ENCODE measurements at regions of chrX and their contacts with region 1.

Region 1: GRCh38 chrX:48776818-48777439 is 9.5 kb upstream of the GATA1 start:
- DNase-seq: no peak

Region 2: DNA sequence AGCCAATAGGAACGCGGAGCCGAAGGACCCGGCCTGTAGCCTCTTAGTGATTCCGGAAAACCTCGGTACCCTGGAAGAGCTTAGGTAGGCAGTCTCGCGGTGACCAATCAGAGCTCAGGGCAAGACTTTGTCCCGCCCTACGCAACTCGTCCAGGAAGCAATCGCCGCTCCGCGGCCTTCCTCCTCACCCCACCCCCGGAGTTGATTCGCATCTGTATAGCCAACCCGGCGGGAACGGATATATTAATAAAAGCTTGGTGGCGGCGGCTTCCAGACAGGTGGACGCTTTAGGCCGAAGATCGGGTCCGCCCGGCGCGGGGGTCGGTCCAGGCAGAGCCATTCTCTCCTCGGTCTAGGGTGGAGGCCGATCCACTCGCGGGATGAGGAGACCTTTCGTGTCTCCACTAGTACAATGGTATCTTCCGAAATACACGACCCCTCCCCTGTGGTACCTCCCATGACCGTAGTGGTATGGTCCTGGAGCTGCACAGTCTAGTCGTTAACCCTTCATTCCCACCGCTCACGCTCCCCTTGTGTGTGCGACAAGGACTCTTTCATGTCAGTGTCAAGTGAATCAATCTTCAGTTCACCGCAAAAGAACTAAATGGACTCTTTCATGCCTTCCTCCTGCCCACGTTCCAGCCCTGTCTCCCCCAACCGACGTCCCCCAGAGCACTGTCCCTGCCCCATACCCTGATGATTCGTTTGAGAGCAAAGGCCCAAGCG is 39.6 kb before region 1 on chrX:
- intact Hi-C with region 1: loop called in 1 of 2 experiments (anchors 1 kb)
- DNase-seq: peak; percentile 97

Region 3: DNA sequence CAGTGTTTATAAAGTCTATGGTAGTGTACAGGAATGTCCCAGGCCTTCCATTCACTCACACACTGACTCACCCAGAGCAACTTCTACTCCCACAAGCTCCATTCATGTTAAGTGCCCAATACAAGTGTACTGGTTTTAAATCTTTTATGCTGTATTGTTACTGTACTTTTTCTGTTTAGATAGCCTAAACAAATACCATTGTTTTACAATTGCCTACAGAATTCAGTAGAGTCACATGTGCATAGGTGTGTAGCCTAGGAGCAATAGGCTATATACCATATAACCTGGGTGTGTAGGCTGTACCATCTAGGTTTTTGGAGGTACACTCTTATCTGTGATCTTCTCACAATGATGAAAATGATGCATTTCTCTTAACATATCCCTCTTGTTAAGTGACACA is 1567.0 kb after region 1 on chrX:
- intact Hi-C with region 1: loop called in 1 of 2 experiments (anchors 5 kb)
- DNase-seq: no peak

Region 4: GRCh38 chrX:50483283-50483682 is 1706.4 kb after region 1 on chrX:
- intact Hi-C with region 1: no loop called
- DNase-seq: no peak